Activated naive CD4-positive, alpha-beta T cell treated with anti-CD3 and anti-CD28 coated beads for 36 hours (primary cell): ENCODE measurements at regions of chr2 and their contacts with region 1.

Region 1: DNA sequence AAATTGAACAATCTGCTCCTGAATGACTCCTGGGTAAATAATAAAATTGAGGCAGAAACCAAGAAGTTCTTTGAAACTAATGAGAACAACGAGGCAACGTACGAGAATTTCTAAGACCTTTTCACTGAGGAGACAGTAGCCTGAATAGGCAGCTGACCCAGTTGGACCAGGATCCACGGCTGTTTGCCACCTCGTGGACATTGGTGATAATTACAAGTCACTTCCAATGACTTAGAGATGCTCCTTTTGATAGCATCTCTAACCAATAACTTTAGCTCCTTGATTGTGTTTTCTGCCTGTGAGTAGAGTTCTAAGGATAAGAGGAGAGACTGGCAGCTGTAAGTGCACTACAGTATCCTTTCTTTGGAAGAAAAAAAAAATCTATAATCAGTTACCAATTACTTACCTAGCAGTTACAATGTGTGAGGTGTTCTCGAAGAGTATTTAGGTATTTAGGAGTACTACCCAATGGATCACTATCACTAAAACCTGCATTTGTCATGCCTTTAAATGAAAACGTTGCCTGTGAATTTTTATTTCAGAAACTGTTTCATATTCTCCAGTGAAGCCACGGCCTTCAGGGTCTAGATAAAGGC is 31.3 kb upstream of the CNTNAP5 start:
- DNase-seq: peak; percentile 25
- H3K4me3 Mint-ChIP-seq: no peak overlapping the region
- H3K27ac Mint-ChIP-seq: no peak overlapping the region
- H3K4me1 Mint-ChIP-seq: peaks cover 5% of the 10 kb centered on the region
- H3K27me3 Mint-ChIP-seq: no peaks in the 10 kb centered on the region

Region 2: DNA sequence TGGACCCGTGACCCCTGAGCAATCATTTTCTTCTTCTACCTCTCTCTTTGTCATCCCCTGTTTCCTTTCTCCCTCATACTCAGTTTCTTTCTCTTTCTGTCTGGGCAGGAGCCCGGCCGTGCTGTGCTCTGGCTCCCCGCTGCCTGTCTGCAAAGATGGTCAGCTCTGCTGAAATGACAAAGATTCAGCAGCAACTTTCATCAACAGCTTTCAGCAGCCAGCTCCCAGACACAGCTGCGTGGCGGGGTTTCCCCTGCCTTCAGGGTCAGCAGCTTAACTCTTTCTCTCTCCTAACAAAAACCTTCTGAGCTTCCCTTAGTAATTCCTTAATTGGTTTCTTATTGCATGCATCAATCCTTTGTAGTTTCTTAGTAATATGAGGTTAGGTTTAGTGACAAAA is 1265.6 kb after region 1 on chr2:
- CTCF ChIA-PET with region 1: interaction called, 10 read pairs
- intact Hi-C with region 1: no loop called
- DNase-seq: no peak
- H3K4me3 Mint-ChIP-seq: no peak overlapping the region
- H3K27ac Mint-ChIP-seq: no peak overlapping the region
- H3K4me1 Mint-ChIP-seq: no peaks in the 10 kb centered on the region
- H3K27me3 Mint-ChIP-seq: no peaks in the 10 kb centered on the region